ENCODE measurements at regions of chr15 and their contacts with region 1.

Region 1: GRCh38 chr15:40893733-40894688 is at the start of gene VPS18:
- DNase-seq: peak; percentile 98
- H3K4me3 Mint-ChIP-seq: peak within 1 kb of the TSS; percentile 97
- H3K27ac Mint-ChIP-seq: peak within 1 kb of the TSS; percentile 92
- H3K4me1 Mint-ChIP-seq: peaks cover 38% of the 10 kb centered on the region
- H3K27me3 Mint-ChIP-seq: peaks cover 4% of the 10 kb centered on the region
- total RNA-seq, gene VPS18: 15.0 and 16.7 TPM in 2 replicates

Region 2: GRCh38 chr15:40564591-40565332 is 329.2 kb before region 1 on chr15 and contains the start of gene CCDC32:
- intact Hi-C with region 1: loop called (anchors 5 kb)
- DNase-seq: peak; percentile 96
- H3K4me3 Mint-ChIP-seq: peak within 1 kb of the TSS; percentile 96
- H3K27ac Mint-ChIP-seq: peak within 1 kb of the TSS; percentile 96
- H3K4me1 Mint-ChIP-seq: peaks cover 43% of the 10 kb centered on the region
- H3K27me3 Mint-ChIP-seq: no peaks in the 10 kb centered on the region
- total RNA-seq, gene CCDC32: 28.4 and 36.9 TPM in 2 replicates

Region 3: DNA sequence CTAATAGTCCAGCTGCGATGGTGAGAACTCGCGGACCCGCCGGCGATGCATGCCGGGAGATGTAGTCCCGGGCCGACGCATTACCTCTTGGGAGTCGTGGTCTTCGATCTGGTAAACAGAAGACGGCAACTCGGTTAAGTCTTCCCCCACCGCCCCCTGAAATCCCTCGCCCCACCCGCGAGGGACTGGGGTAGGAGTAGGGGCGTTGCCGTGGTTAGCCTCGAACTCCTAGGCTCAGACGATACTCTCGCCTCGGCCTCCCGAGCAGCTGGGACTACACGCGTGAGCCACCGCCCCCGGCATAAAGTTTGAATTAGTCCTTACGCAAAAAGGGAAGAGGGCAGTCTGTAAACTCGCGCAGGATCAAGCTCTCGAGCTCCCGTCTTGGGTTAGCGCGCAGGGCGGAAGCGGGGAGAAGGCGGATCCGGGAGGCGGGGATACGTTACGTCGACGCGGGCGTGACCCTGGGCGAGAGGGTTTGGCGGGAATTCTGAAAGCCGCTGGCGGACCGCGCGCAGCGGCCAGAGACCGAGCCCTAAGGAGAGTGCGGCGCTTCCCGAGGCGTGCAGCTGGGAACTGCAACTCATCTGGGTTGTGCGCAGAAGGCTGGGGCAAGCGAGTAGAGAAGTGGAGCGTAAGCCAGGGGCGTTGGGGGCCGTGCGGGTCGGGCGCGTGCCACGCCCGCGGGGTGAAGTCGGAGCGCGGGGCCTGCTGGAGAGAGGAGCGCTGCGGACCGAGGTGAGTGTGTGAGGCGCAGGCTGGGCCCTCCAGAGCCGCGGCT is 199.1 kb before region 1 on chr15 and contains the start of gene RAD51:
- intact Hi-C with region 1: loop called (anchors 1 kb)
- DNase-seq: peak; percentile 91
- H3K4me3 Mint-ChIP-seq: peak within 1 kb of the TSS; percentile 96
- H3K27ac Mint-ChIP-seq: peak within 1 kb of the TSS; percentile 91
- H3K4me1 Mint-ChIP-seq: peaks cover 41% of the 10 kb centered on the region
- H3K27me3 Mint-ChIP-seq: no peaks in the 10 kb centered on the region
- total RNA-seq, gene RAD51: 62.0 and 62.4 TPM in 2 replicates

Region 4: GRCh38 chr15:40763801-40764732 is 129.9 kb before region 1 on chr15 and contains the start of gene GCHFR:
- intact Hi-C with region 1: loop called (anchors 2 kb)
- DNase-seq: peak; percentile 73
- H3K4me3 Mint-ChIP-seq: peak within 1 kb of the TSS; percentile 81
- H3K27ac Mint-ChIP-seq: peak within 1 kb of the TSS; percentile 87
- H3K4me1 Mint-ChIP-seq: peaks cover 21% of the 10 kb centered on the region
- H3K27me3 Mint-ChIP-seq: peaks cover 2% of the 10 kb centered on the region
- total RNA-seq, gene GCHFR: 31.3 and 35.7 TPM in 2 replicates

Region 5: GRCh38 chr15:40873625-40874561 is 20.1 kb before region 1 on chr15 and contains the start of gene RHOV:
- intact Hi-C with region 1: loop called (anchors 2 kb)
- DNase-seq: peak; percentile 58
- H3K4me3 Mint-ChIP-seq: peak within 1 kb of the TSS; percentile 88
- H3K27ac Mint-ChIP-seq: peak within 1 kb of the TSS; percentile 68
- H3K4me1 Mint-ChIP-seq: peaks cover 34% of the 10 kb centered on the region
- H3K27me3 Mint-ChIP-seq: peaks cover 7% of the 10 kb centered on the region
- total RNA-seq, gene RHOV: 1.3 and 1.6 TPM in 2 replicates

Region 6: DNA sequence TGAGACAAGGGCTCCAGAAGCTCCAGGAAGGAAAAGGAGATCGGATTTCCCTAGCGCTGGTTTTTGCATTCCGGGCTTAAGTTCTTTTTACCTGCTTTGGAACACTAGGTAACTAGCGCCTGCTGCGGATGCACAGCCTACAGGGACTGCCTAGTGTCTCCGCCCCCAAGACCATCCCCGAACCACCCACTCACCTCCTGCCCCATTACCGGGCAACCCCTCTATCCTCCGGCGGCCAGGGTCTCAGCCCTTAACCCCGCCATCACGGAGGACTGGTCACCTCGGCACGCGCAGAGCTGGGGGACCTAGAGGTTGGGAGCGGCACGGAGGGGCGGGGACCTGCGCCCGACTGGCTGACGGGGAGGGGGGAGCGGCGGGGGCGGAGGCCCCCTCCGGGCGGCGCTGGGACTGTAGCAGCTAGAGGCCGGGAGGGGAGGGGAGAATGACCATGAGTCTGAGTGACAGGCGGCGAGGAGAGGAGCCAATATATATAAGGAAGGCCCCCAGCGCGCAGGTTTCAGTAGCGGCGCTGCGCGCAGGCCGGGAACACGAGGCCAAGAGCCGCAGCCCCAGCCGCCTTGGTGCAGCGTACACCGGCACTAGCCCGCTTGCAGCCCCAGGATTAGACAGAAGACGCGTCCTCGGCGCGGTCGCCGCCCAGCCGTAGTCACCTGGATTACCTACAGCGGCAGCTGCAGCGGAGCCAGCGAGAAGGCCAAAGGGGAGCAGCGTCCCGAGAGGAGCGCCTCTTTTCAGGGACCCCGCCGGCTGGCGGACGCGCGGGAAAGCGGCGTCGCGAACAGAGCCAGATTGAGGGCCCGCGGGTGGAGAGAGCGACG is 35.0 kb after region 1 on chr15 and contains the start of gene DLL4:
- intact Hi-C with region 1: no loop called
- DNase-seq: no peak
- H3K4me3 Mint-ChIP-seq: peak within 1 kb of the TSS; percentile 74
- H3K27ac Mint-ChIP-seq: peak within 1 kb of the TSS; percentile 65
- H3K4me1 Mint-ChIP-seq: peaks cover 45% of the 10 kb centered on the region
- H3K27me3 Mint-ChIP-seq: peaks cover 66% of the 10 kb centered on the region
- total RNA-seq, gene DLL4: 0.29 and 0.36 TPM in 2 replicates

Region 7: GRCh38 chr15:41230650-41231533 is 336.9 kb after region 1 on chr15 and contains the starts of genes CHP1 and EXD1:
- intact Hi-C with region 1: loop called (anchors 2 kb)
- DNase-seq: peak; percentile 96
- H3K4me3 Mint-ChIP-seq: peak within 1 kb of the TSS; percentile 92
- H3K27ac Mint-ChIP-seq: peak within 1 kb of the TSS; percentile 89
- H3K4me1 Mint-ChIP-seq: peaks cover 23% of the 10 kb centered on the region
- H3K27me3 Mint-ChIP-seq: no peaks in the 10 kb centered on the region
- total RNA-seq, gene CHP1: 43.5 and 55.2 TPM in 2 replicates
- total RNA-seq, gene EXD1: not detected in 2 replicates